Adrenal gland (tissue), 19 donors: ENCODE measurements at regions of chr17 and their contacts with region 1.

Region 1: DNA sequence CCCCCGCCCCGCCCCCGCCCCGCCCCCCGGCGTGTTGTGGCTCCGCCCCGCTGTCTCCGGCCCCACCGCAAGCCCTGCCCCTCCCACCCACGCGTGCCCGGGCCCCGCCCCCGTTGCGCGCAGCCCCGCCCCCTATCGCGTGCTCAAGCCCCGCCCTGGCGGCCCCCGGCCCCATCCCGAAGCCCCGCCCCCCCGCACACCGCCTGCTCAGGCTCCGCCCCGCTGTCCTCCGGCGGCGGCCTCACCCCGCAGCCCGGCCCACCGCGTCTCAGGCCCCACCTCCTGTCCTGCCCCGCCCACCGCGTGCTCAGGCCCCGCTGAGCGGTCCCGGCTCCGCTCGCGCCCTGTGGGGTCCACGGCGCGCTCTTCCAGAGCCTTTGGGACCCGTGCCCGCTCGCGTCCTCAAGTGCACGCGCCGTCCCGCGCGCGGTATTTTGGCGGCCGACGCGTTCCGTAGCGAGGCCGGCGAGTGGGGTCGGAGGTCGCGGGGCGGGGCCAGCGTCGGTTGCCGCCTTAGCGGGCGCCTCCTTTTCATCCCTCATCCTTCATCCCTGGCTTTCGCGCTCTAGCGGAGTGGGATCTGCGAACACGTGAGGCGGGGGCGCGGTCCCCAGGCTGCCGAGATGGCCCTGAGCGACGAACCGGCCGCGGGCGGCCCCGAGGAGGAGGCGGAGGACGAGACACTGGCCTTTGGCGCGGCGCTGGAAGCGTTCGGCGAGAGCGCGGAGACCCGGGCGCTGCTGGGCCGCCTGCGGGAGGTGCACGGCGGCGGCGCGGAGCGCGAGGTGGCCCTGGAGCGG is at the start of gene TBCD:
- DNase-seq: peak; percentile 88 to 93 (median 91)
- H3K4me3 ChIP-seq: peak within 1 kb of the TSS; percentile 27 to 92 (median 32)
- H3K27ac ChIP-seq: peak within 1 kb of the TSS; percentile 61 to 92 (median 79)
- H3K4me1 ChIP-seq: peaks cover 8 to 10% of the 10 kb centered on the region in 2 donors
- H3K27me3 ChIP-seq: no peaks in the 10 kb centered on the region
- CTCF ChIP-seq: no peak
- POLR2A ChIP-seq: peak in 1 of 2 donors; percentile 43
- total RNA-seq, gene TBCD: 43.2 to 112 (median 64.5) TPM

Region 2: GRCh38 chr17:82551779-82552457 is 199.9 kb before region 1 on chr17:
- intact Hi-C with region 1: no loop called
- DNase-seq: peak; percentile 76 to 88 (median 84)
- H3K4me3 ChIP-seq: no peak overlapping the region
- H3K27ac ChIP-seq: peak overlapping the region; percentile 28 to 91 (median 88)
- H3K4me1 ChIP-seq: peaks cover 49 to 57% of the 10 kb centered on the region in 2 donors
- H3K27me3 ChIP-seq: no peaks in the 10 kb centered on the region
- CTCF ChIP-seq: peak; percentile 55 to 79 (median 70)
- POLR2A ChIP-seq: no peak

Region 3: GRCh38 chr17:82648166-82648668 is 103.6 kb before region 1 on chr17 and contains the start of gene WDR45B:
- intact Hi-C with region 1: loop called in 1 of 2 experiments (anchors 10 kb)
- DNase-seq: peak; percentile 95 to 98 (median 97)
- H3K4me3 ChIP-seq: peak within 1 kb of the TSS; percentile 86 to 94 (median 90)
- H3K27ac ChIP-seq: peak within 1 kb of the TSS; percentile 83 to 100 (median 98)
- H3K4me1 ChIP-seq: peaks cover 10 to 12% of the 10 kb centered on the region in 2 donors
- H3K27me3 ChIP-seq: no peaks in the 10 kb centered on the region
- CTCF ChIP-seq: peak in 1 of 6 experiments; percentile 2
- POLR2A ChIP-seq: peak; percentile 98 to 99
- total RNA-seq, gene WDR45B: 57.9 to 104 (median 77.8) TPM

Region 4: GRCh38 chr17:82698065-82698973 is 53.5 kb before region 1 on chr17 and contains the start of gene RAB40B:
- intact Hi-C with region 1: no loop called
- DNase-seq: peak; percentile 99 to 100 (median 100)
- H3K4me3 ChIP-seq: peak within 1 kb of the TSS in 3 of 4 donors; percentile 11 to 99 (median 47)
- H3K27ac ChIP-seq: peak within 1 kb of the TSS in 2 of 5 donors; percentile 41 to 78
- H3K4me1 ChIP-seq: peaks cover 8 to 11% of the 10 kb centered on the region in 2 donors
- H3K27me3 ChIP-seq: no peaks in the 10 kb centered on the region
- CTCF ChIP-seq: peak in 1 of 6 experiments; percentile 7
- POLR2A ChIP-seq: peak; percentile 48 to 61
- total RNA-seq, gene RAB40B: 5.9 to 33.3 (median 13.9) TPM